K562 (cell line): ENCODE measurements at regions of chr1 and their contacts with region 1.

Region 1: GRCh38 chr1:229258031-229258756 is 12.7 kb upstream of the RAB4A start:
- DNase-seq: peak; percentile 67 to 81 (median 74)
- ATAC-seq: peak; percentile 93
- H3K4me3 ChIP-seq: no peak overlapping the region
- H3K27ac ChIP-seq: no peak overlapping the region
- H3K4me1 ChIP-seq: peaks cover 0 to 5% of the 10 kb centered on the region in 2 experiments; a peak in 2 of 5 replicates
- H3K27me3 ChIP-seq: peaks cover 0 to 3% of the 10 kb centered on the region in 2 experiments; a peak in 1 of 5 replicates
- CTCF ChIP-seq: peak; percentile 78 to 97 (median 89)
- EP300 ChIP-seq: no peak
- POLR2A ChIP-seq: no peak
- RAD21 ChIP-seq: peak; percentile 97 to 98

Region 2: DNA sequence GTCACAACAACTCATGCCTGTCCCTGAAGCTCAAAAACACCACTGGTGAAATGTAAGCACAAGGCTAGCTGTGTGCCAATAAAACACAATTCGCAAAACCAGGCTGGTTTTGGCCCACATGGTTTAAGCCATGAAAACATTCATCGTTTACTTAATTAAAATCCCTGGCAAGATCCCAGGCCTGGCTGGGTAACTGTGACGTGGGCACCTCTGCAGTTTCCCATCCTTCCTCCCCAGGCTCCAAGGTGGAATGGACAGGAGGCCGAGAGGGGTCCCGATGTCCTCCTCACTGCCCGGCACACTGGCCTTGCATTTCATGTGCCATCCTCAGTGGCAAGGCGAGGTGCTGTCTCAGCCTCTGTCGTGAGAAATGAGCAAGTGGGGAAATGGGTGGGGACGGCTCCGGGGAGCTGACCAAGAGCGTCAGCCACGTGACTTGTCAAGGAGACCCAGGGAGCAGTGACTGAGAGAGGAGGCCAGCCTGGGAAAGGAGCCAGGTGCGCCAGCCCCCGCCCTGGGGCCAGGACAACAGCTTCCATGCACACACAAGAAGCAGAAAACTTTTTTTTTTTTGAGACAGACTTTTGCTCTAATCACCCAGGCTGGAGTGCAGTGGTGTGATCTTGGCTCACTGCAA is 140.4 kb before region 1 on chr1:
- CTCF ChIA-PET with region 1: no interaction called
- POLR2A ChIA-PET with region 1: no interaction called
- in situ Hi-C with region 1: no loop called
- intact Hi-C with region 1: no loop called
- DNase-seq: peak in 1 of 4 experiments; percentile 16
- ATAC-seq: peak; percentile 39; the same call in 2 of the 3 replicates
- H3K4me3 ChIP-seq: no peak overlapping the region
- H3K27ac ChIP-seq: no peak overlapping the region
- H3K4me1 ChIP-seq: peaks cover 4 to 5% of the 10 kb centered on the region in 2 experiments; a peak in 2 of 5 replicates
- H3K27me3 ChIP-seq: peaks cover 2 to 45% of the 10 kb centered on the region in 2 experiments
- CTCF ChIP-seq: no peak
- EP300 ChIP-seq: no peak
- POLR2A ChIP-seq: no peak
- RAD21 ChIP-seq: no peak

Region 3: DNA sequence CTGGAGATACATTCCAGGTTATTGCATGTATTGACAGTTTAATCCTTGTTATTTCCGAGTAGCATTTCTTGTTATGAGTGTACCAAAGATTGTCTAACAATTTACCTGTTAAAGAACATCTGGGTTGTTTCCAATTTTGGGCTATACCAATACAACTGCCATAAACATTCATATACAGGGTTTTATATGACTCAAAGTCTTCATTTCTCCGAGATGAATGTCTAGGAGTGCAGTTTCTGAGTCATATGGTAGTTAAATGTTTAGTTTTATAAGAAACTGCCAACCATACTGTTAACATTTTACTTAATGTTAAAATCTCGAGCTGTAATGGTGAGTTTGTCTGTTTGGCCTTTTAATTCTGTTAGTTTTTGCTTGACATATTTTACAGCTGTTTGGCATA is 22.7 kb after region 1 on chr1:
- CTCF ChIA-PET with region 1: no interaction called
- POLR2A ChIA-PET with region 1: no interaction called
- in situ Hi-C with region 1: no loop called
- intact Hi-C with region 1: no loop called
- DNase-seq: no peak
- ATAC-seq: no peak
- H3K4me3 ChIP-seq: no peak overlapping the region
- H3K27ac ChIP-seq: peak overlapping the region; percentile 38; the same call in 1 of the 3 replicates
- H3K4me1 ChIP-seq: peaks cover 7 to 40% of the 10 kb centered on the region in 2 experiments
- H3K27me3 ChIP-seq: no peaks in the 10 kb centered on the region
- CTCF ChIP-seq: no peak
- EP300 ChIP-seq: no peak
- POLR2A ChIP-seq: no peak
- RAD21 ChIP-seq: no peak

Region 4: DNA sequence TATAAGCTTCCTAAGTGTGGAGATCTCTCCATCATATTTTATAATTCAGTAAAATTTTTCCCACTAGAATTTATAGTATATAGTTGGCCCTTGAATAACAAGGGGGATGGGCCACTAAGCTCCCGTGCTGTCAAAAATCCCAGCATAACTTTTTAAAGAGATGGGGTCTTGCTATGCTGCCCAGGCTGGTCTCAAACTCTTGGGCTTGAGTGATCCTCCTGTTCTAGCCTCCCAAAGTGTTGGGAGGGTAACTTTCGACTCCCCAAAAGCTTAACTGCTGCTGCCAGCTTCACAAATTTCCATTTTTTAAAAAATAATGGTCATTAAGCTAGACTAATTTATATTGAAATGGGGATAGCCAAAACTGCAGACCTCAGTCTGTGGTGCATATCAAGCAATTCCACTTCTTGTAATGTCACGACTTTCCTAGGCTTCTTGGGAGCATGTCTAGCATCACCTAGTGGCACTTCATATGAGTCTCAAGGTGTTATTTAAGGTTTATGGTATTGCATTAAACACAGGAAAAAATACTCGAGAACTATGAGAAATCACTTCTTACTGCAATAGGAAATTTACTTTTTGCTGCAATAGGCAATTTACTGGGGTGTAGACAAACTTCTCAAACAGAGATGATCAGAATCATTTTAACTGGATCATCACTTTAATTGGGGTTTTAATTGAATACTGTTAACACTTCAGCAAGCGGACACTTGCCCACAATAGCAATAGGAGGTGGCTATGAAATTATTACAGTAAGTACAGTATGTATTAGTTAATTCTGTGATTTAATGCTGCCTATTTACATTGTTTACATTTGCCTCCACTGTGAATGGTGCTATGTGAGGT is 195.0 kb after region 1 on chr1:
- CTCF ChIA-PET with region 1: interaction called, 20 read pairs
- POLR2A ChIA-PET with region 1: no interaction called
- in situ Hi-C with region 1: no loop called
- intact Hi-C with region 1: loop called (anchors 1 kb)
- DNase-seq: peak in 1 of 4 experiments; percentile 20
- ATAC-seq: peak; percentile 72
- H3K4me3 ChIP-seq: no peak overlapping the region
- H3K27ac ChIP-seq: no peak overlapping the region
- H3K4me1 ChIP-seq: peaks cover 0 to under 1% of the 10 kb centered on the region in 2 experiments; a peak in 1 of 5 replicates
- H3K27me3 ChIP-seq: no peaks in the 10 kb centered on the region
- CTCF ChIP-seq: peak; percentile 38 to 70 (median 58); a peak in 5 of 6 replicates
- EP300 ChIP-seq: no peak
- POLR2A ChIP-seq: no peak
- RAD21 ChIP-seq: peak; percentile 59 to 72

Region 5: GRCh38 chr1:229479660-229480399 is 221.6 kb after region 1 on chr1:
- CTCF ChIA-PET with region 1: interaction called, 50 read pairs
- POLR2A ChIA-PET with region 1: interaction called, 4 read pairs
- in situ Hi-C with region 1: loop called (anchors 5 kb)
- intact Hi-C with region 1: loop called (anchors 1 kb)
- DNase-seq: peak in 2 of 4 experiments; percentile 18 to 38
- ATAC-seq: peak; percentile 67
- H3K4me3 ChIP-seq: no peak overlapping the region
- H3K27ac ChIP-seq: no peak overlapping the region
- H3K4me1 ChIP-seq: peaks cover 0 to 8% of the 10 kb centered on the region in 2 experiments; a peak in 1 of 5 replicates
- H3K27me3 ChIP-seq: no peaks in the 10 kb centered on the region
- CTCF ChIP-seq: no peak
- EP300 ChIP-seq: no peak
- POLR2A ChIP-seq: no peak
- RAD21 ChIP-seq: no peak

Region 6: DNA sequence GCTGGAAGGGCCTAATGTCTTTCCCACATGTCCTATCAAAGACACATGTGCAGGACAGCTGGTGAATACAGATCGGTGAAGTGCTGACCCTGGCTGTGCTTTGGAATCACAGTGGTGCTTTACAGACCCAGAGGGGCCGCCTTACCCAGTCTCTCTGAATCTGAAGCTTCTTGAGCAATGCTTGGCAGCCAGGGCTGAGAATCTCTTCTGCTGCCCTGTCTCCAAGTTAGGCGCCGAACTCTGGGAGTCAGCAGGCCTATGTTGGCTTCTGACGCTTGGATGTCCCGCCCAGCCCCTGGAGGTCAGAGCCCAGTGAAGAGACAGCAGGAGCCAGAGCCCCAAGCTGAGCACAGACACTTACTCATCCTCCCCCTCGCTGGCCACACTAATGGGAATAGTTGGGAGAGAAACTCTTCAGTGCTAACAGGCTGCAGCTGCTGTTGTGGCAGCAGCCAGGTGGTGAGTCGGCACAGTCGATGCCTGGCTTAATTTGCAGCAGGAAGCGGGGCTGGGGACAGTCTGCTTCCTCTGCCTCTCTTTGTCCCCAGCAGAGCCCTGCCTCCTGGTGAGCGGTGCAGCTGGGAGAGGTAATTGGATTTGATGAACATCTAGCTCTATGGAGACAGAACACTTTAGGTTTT is 436.0 kb after region 1 on chr1:
- CTCF ChIA-PET with region 1: no interaction called
- POLR2A ChIA-PET with region 1: no interaction called
- in situ Hi-C with region 1: no loop called
- intact Hi-C with region 1: loop called (anchors 10 kb)
- DNase-seq: no peak
- ATAC-seq: peak; percentile 39
- H3K4me3 ChIP-seq: no peak overlapping the region
- H3K27ac ChIP-seq: no peak overlapping the region
- H3K4me1 ChIP-seq: no peaks in the 10 kb centered on the region
- H3K27me3 ChIP-seq: peaks cover 50 to 71% of the 10 kb centered on the region in 2 experiments
- CTCF ChIP-seq: no peak
- EP300 ChIP-seq: no peak
- POLR2A ChIP-seq: no peak
- RAD21 ChIP-seq: no peak